CD4-positive, alpha-beta T cell (primary cell): ENCODE measurements at regions of chr11 and their contacts with region 1.

Region 1: DNA sequence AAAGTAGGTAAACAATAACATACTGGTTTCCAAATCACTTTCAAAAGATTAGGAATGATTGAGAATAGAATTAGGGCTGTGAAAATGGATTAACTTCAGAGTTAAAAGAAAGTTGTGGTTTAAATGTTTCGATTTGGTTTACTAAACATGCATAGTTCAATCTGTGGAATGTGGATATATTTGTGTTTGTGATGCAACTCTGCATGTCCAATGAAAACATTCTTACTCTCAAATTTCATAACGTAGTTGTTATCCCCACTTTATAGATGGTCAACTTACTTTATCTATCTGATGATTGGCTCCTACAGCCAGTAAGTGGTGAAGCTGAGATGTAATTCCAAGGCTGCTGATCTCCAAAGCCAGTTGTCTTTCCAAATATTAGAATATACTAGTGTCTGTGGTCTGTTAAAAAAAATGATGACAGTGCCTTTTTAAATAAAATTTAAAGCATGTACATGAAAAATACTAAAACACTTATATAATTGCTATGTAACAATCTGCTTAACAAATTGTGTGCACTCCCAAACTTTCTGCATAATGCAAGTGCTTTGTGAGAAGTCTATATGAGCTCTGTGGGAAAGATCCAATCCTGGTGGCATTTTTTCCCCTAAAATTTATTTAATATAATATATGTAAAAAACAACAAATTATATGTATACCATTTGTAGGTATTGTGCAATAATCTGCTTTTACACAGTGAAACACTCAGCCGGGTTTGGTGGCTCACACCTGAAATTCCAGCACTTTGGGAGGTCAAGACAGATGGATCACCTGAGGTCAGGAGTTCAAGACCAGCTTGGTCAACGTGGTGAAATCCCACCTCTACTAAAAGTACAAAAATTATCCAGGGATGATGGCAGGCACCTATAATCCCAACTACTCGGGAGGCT is 9.7 kb upstream of the SIK3 start:
- DNase-seq: no peak
- ATAC-seq: no peak
- H3K4me3 ChIP-seq: no peak overlapping the region
- H3K4me3 Mint-ChIP-seq: no peak overlapping the region
- H3K27ac ChIP-seq: no peak overlapping the region
- H3K27ac Mint-ChIP-seq: no peak overlapping the region
- H3K4me1 ChIP-seq: peaks cover 6% of the 10 kb centered on the region
- H3K4me1 Mint-ChIP-seq: no peaks in the 10 kb centered on the region
- H3K27me3 ChIP-seq: no peaks in the 10 kb centered on the region
- H3K27me3 Mint-ChIP-seq: no peaks in the 10 kb centered on the region
- CTCF ChIP-seq: no peak

Region 2: GRCh38 chr11:115496917-115497702 is 1610.8 kb before region 1 on chr11:
- CTCF ChIA-PET with region 1: no interaction called
- POLR2A ChIA-PET with region 1: no interaction called
- intact Hi-C with region 1: no loop called
- DNase-seq: no peak
- ATAC-seq: no peak
- H3K4me3 ChIP-seq: no peak overlapping the region
- H3K4me3 Mint-ChIP-seq: no peak overlapping the region
- H3K27ac ChIP-seq: no peak overlapping the region
- H3K27ac Mint-ChIP-seq: no peak overlapping the region
- H3K4me1 ChIP-seq: peaks cover 6% of the 10 kb centered on the region
- H3K4me1 Mint-ChIP-seq: no peaks in the 10 kb centered on the region
- H3K27me3 ChIP-seq: peaks cover 18 to 45% of the 10 kb centered on the region in 2 experiments
- H3K27me3 Mint-ChIP-seq: peaks cover 37% of the 10 kb centered on the region
- CTCF ChIP-seq: no peak

Region 3: DNA sequence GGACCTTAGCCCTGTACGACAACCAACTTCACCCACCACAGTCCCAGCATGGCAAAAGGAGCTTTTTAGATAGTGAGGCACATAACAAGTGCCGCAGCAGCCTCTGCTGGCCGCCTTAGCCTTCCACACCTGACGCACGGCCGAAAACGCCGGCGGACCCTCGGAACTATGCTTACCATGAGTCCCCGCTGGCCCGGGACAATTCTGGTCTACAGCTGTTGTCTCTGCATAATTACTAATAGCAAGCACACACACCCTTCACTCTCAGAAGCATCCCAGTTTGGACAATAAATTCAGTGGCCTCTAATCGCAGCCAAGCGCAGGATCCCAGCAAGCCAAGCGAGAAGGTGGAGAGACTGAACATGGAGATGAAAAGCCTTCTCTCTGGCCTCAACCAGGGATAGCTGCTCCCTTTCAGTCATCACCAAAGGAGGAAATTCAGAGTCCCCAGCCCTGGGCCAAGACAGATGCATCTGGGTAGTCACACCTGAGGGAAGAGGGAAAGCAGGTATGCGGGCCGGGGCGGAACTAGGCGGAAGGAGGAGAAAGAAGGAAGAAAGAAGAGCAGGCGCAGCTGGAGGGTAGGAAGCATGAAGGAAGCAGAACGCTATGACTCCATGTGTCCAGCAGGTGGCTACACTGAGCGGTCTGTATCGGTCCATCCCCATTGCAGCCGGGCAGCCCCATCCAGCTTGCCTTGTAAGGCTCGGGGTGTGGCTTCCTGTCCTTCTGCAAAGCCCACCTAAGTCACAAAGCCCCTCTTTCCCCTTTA is 375.5 kb before region 1 on chr11:
- CTCF ChIA-PET with region 1: interaction called, 4 read pairs
- POLR2A ChIA-PET with region 1: no interaction called
- intact Hi-C with region 1: loop called (anchors 1 kb)
- DNase-seq: peak; percentile 33 to 76 (median 45)
- ATAC-seq: peak; percentile 95
- H3K4me3 ChIP-seq: no peak overlapping the region
- H3K4me3 Mint-ChIP-seq: no peak overlapping the region
- H3K27ac ChIP-seq: no peak overlapping the region
- H3K27ac Mint-ChIP-seq: no peak overlapping the region
- H3K4me1 ChIP-seq: peaks cover 7% of the 10 kb centered on the region
- H3K4me1 Mint-ChIP-seq: peaks cover 7% of the 10 kb centered on the region
- H3K27me3 ChIP-seq: peaks cover 0 to 2% of the 10 kb centered on the region in 2 experiments
- H3K27me3 Mint-ChIP-seq: no peaks in the 10 kb centered on the region
- CTCF ChIP-seq: peak; percentile 83

Region 4: DNA sequence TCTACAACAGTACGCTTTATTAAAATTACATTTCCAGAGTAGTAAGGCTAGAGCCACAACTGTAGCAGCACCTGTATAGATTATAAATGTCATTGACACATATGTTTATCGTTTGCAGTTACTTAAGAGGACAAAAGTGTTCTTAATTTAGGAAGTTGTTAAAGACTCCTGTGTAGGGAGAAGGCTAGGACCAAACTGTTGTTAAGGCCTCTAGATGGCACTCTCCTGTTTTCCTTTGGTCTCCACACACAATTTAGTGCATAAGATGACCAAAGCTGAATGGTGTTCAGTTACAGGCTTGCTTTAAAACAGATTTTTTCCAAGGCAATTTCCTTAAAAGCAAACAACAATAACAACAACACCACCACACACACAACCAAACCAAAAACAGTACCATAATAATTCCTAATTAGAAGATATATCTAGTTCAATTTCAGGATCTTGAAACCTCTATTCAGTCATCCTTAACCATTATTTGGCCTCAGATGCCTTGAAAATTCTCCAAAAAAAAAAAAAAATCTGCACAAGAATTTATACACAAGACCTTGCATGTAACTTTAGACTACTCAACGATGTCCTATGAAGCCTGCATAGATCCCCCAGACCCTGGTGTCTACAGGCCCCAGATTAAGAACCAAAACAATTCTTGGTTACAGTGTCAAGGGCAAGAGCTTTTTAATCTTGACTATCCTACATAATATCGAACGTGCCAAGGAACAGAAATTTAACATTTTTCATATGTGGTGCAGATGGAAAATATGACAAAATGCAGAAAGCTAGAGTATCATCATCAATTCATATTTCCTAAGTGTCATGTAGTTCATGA is 227.9 kb before region 1 on chr11:
- CTCF ChIA-PET with region 1: interaction called, 23 read pairs
- POLR2A ChIA-PET with region 1: interaction called, 4 read pairs
- intact Hi-C with region 1: loop called (anchors 1 kb)
- DNase-seq: peak in 4 of 14 experiments; percentile 20 to 78 (median 71)
- ATAC-seq: peak; percentile 83
- H3K4me3 ChIP-seq: no peak overlapping the region
- H3K4me3 Mint-ChIP-seq: no peak overlapping the region
- H3K27ac ChIP-seq: no peak overlapping the region
- H3K27ac Mint-ChIP-seq: no peak overlapping the region
- H3K4me1 ChIP-seq: no peaks in the 10 kb centered on the region
- H3K4me1 Mint-ChIP-seq: peaks cover 15% of the 10 kb centered on the region
- H3K27me3 ChIP-seq: no peaks in the 10 kb centered on the region
- H3K27me3 Mint-ChIP-seq: no peaks in the 10 kb centered on the region
- CTCF ChIP-seq: peak; percentile 80

Region 5: DNA sequence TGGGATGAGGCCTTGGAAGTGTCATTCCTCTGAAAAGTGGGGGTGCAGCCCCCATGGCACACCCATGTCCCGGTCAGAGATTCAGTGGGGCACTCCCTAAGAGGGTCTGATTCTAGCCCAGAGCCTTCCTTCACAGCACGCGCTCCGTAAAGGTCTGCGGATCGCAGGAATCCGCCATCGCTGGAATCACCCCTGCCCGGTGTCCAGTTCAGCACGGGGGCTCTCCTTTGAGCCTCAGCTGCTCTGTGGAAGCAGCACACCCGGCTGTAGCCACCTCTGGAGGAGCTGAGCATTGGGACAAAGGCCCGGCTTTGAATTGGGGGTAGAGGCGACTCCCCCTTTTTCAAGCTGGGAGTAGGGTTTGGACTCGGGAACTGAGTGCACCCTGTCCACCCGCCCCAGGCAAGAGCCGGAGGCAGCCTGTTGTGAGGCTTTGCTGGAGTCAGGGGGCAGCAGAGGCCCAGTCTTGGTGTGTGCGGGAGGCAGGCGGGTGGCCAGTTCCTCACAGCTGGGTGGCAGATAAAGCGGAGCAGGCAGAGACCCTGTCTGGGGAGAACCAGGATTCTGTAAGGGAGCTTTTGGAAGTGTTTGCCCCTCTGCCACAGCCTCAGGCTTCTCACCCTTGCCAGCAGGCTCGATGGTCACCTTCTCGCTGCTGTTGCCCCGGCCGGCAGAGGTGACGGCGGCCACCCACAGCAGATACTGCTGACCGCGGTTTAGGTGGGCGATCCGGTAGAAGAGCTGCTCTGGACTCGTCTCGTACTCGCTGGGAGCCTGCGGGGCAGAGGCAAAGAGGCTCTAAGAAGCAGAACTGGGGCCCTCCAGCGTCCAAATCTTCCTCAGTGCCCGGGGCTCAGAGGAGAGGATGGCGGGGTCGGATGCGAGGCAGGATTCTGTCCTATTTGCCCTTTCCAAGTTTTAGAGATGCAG is 335.6 kb after region 1 on chr11:
- CTCF ChIA-PET with region 1: no interaction called
- POLR2A ChIA-PET with region 1: no interaction called
- intact Hi-C with region 1: no loop called
- DNase-seq: no peak
- ATAC-seq: no peak
- H3K4me3 ChIP-seq: no peak overlapping the region
- H3K4me3 Mint-ChIP-seq: no peak overlapping the region
- H3K27ac ChIP-seq: no peak overlapping the region
- H3K27ac Mint-ChIP-seq: no peak overlapping the region
- H3K4me1 ChIP-seq: no peaks in the 10 kb centered on the region
- H3K4me1 Mint-ChIP-seq: no peaks in the 10 kb centered on the region
- H3K27me3 ChIP-seq: peaks cover 0 to 7% of the 10 kb centered on the region in 2 experiments
- H3K27me3 Mint-ChIP-seq: peaks cover 27% of the 10 kb centered on the region
- CTCF ChIP-seq: no peak